Activated T-helper 2 cell treated with anti-CD3 and anti-CD28 coated beads, Interferon-gamma antibody, Interleukin-2, Interleukin-4, amounts not matched to agents 10 μg/mL and 5 μg/mL and 100 μg/mL, durations not matched to agents 14 hours and 24 hours and 36 hours (primary cell): ENCODE measurements at regions of chr20 and their contacts with region 1.

Region 1: DNA sequence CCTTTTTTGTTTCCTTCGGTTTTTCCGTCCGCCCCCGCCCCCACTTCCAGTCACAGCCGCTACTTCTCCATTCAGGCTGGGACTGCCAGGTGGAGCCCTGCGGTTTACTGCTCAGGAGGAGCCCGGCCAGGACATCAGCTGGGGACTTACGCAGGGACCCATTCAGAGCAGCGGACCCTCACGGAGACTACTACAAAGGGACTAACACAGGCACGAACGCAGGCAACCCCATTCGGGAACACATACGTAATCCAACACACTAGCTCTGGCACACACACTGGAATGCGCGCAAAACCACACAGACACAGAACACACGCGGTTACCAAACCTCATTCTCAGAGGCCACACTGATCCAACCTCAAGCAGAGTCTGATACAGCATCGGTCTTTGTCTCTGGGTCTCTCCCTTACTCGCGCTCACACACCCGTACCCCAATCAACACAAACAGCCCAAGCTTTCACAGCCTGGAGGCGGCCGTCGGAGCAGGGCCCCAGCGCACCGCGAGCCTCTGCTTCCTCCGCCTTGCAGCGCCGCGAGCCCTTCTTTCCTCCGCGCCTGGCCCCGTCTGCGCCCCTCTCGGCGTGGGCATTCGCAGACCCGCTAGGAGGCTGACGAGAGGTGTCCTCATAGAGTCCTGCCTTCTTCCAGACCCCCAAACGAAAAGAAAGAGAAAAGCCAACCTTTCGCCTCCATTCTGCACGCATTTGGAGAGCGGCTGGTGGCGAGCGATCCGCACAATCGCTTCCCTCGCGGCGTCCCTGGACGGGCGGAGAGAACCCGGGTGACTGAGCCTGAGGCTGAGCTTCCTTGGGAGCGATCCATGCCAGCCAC is 1.1 kb upstream of the SLC32A1 start:
- DNase-seq: no peak
- H3K4me3 Mint-ChIP-seq: no peak overlapping the region
- H3K27ac Mint-ChIP-seq: no peak overlapping the region
- H3K4me1 Mint-ChIP-seq: peaks cover 22% of the 10 kb centered on the region
- H3K27me3 Mint-ChIP-seq: peaks cover 84% of the 10 kb centered on the region

Region 2: GRCh38 chr20:38685853-38686473 is 37.3 kb before region 1 on chr20:
- intact Hi-C with region 1: loop called (anchors 5 kb)
- DNase-seq: peak; percentile 30
- H3K4me3 Mint-ChIP-seq: no peak overlapping the region
- H3K27ac Mint-ChIP-seq: no peak overlapping the region
- H3K4me1 Mint-ChIP-seq: no peaks in the 10 kb centered on the region
- H3K27me3 Mint-ChIP-seq: peaks cover 9% of the 10 kb centered on the region